HepG2 (cell line): ENCODE measurements at regions of chr20 and their contacts with region 1.

Region 1: DNA sequence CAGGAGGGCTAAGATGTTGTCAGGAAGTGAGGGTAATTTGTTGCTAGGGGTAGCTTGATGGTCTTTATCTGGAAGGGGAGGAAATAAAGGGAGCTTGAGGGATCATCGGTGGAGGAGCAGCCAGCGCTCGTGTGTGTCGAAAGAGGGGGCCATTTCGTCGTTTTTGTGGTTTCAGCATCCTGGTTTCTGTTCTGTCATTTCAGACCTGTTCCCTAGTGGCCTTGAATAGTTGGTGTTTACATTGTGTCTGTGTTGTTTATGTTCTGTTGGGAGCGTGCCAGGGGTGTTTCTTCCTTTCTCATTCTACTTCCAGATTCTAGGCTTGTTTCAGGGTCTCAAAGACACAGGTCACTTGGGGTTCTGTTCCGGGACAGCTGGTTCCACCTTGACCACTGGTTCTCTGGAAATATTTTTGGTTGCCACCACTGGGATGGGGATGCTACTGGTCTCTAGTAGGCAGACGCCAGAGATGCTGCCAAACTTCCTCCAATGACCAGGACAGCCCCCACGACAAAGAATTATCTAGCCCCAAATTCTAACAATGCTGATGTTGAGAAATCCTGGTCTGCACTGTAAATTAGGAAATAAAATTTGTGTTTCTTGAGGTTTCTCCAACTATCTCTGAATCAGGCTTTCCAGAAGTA is 113.9 kb upstream of the NAA20 start:
- DNase-seq: peak; percentile 86
- ATAC-seq: peak; percentile 86
- H3K4me3 ChIP-seq: no peak overlapping the region
- H3K27ac ChIP-seq: no peak overlapping the region
- H3K4me1 ChIP-seq: peaks cover 17% of the 10 kb centered on the region
- H3K27me3 ChIP-seq: no peaks in the 10 kb centered on the region
- CTCF ChIP-seq: peak; percentile 95
- EP300 ChIP-seq: peak in 1 of 2 experiments; percentile 64; a peak in 1 of 4 replicates
- POLR2A ChIP-seq: no peak
- RAD21 ChIP-seq: peak; percentile 80

Region 2: DNA sequence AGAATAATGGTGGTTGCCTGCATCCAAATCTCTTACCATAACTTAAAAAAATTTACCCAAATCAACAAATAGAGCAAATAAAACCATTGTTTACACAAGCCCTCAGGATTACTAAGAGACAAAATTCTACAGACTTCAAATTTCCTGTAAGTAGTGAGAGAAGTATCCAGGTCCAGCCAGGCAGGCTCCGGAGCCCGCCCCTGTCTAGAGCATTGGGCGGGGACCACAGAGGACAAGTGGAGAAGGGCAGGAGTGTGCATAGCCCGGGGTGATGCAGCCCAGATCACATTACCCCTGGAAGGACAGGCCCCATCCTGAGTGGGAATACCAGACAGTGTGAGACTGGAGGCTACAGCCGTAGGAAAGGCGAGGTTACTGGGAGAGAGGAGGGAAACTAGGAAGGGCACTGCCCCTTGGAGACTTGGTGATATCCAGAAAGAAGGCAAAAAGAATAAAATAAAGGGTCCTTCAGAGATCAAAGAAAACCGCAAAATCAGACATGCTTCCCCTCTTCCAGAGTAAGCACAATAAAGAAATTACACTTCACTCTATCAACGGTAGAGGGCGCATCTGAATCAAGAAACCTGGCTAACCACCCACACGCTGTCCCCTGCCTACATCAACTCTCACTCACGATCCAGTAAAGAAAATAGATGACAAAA is 118.6 kb before region 1 on chr20:
- CTCF ChIA-PET with region 1: no interaction called
- POLR2A ChIA-PET with region 1: no interaction called
- in situ Hi-C with region 1: no loop called
- intact Hi-C with region 1: loop called (anchors 1 kb)
- DNase-seq: peak; percentile 75
- ATAC-seq: peak; percentile 91
- H3K4me3 ChIP-seq: 0 out of 6 replicates have a peak overlapping the region, but pooled peaks of 1 of the 3 experiments have one; percentile 2
- H3K27ac ChIP-seq: no peak overlapping the region
- H3K4me1 ChIP-seq: peaks cover 14% of the 10 kb centered on the region
- H3K27me3 ChIP-seq: no peaks in the 10 kb centered on the region
- CTCF ChIP-seq: peak; percentile 88
- EP300 ChIP-seq: no peak
- POLR2A ChIP-seq: no peak
- RAD21 ChIP-seq: peak; percentile 72

Region 3: GRCh38 chr20:19952392-19952791 is 49.1 kb after region 1 on chr20:
- CTCF ChIA-PET with region 1: no interaction called
- POLR2A ChIA-PET with region 1: no interaction called
- in situ Hi-C with region 1: no loop called
- intact Hi-C with region 1: no loop called
- DNase-seq: no peak
- ATAC-seq: no peak
- H3K4me3 ChIP-seq: no peak overlapping the region
- H3K27ac ChIP-seq: no peak overlapping the region
- H3K4me1 ChIP-seq: peaks cover 14% of the 10 kb centered on the region
- H3K27me3 ChIP-seq: no peaks in the 10 kb centered on the region
- CTCF ChIP-seq: no peak
- EP300 ChIP-seq: no peak
- POLR2A ChIP-seq: no peak
- RAD21 ChIP-seq: no peak

Region 4: GRCh38 chr20:20003031-20003954 is 100.0 kb after region 1 on chr20:
- CTCF ChIA-PET with region 1: no interaction called
- POLR2A ChIA-PET with region 1: no interaction called
- in situ Hi-C with region 1: loop called (anchors 5 kb)
- intact Hi-C with region 1: no loop called
- DNase-seq: no peak
- ATAC-seq: no peak
- H3K4me3 ChIP-seq: peak overlapping the region in 1 of 3 experiments; percentile 53; a peak in 1 of 6 replicates
- H3K27ac ChIP-seq: peak overlapping the region; percentile 87
- H3K4me1 ChIP-seq: peaks cover 74% of the 10 kb centered on the region
- H3K27me3 ChIP-seq: no peaks in the 10 kb centered on the region
- CTCF ChIP-seq: no peak
- EP300 ChIP-seq: no peak
- POLR2A ChIP-seq: no peak
- RAD21 ChIP-seq: no peak